Gastrocnemius medialis (tissue), 4 donors: ENCODE measurements at regions of chr9 and their contacts with region 1.

Region 1: GRCh38 chr9:14030375-14031059 is 283.4 kb downstream of the NFIB start:
- DNase-seq: peak; percentile 40 to 43
- ATAC-seq: peak; percentile 66 to 68
- H3K4me3 ChIP-seq: peak overlapping the region; percentile 20 to 46 (median 38)
- H3K27ac ChIP-seq: peak overlapping the region; percentile 83 to 91 (median 85)
- H3K4me1 ChIP-seq: peaks cover 43 to 66% of the 10 kb centered on the region in 2 donors
- H3K27me3 ChIP-seq: no peaks in the 10 kb centered on the region
- CTCF ChIP-seq: no peak
- POLR2A ChIP-seq: no peak

Region 2: GRCh38 chr9:14018081-14018480 is 12.4 kb before region 1 on chr9:
- in situ Hi-C with region 1: no loop called
- intact Hi-C with region 1: loop called (anchors 2 kb)
- DNase-seq: peak in 1 of 2 donors; percentile 45
- ATAC-seq: peak; percentile 34 to 56
- H3K4me3 ChIP-seq: no peak overlapping the region
- H3K27ac ChIP-seq: peak overlapping the region; percentile 21 to 70 (median 38)
- H3K4me1 ChIP-seq: peaks cover 20 to 32% of the 10 kb centered on the region in 2 donors
- H3K27me3 ChIP-seq: no peaks in the 10 kb centered on the region
- CTCF ChIP-seq: no peak
- POLR2A ChIP-seq: no peak

Region 3: DNA sequence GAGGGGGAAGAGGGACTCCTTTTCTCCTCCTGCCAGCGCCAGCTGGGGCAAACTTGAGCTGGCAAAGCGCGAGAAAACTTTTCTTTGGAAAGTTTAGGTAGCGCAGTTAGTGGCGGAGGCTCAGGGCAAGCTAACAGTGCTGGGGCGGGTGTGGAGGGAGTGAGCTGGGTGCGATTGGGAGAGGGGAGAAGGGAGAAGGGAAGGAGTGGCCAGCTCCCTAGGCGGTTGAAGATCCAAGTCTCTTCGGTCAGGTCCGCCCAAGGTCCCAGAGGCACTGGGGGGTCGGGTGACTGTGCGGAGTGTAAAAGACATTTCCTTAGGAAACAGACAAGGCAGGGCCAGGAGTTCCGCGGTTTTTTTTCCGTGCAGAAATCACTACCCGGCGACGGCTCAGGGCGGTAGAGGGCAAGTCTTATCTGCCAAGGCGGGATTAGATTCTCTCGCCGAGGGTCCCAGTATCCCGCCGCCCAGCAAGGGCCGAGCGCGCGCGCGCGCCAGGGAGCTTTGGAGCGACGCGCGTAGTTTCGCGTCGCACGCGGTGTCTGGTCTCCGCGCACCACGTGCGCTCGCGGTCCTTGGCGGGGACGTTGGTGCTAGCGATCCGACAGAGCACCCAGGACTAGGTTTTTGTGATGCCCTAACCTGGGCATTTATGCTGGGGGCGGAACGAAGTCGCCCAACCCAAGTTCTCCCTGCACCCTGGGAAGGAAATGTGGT is 317.0 kb after region 1 on chr9:
- in situ Hi-C with region 1: no loop called
- intact Hi-C with region 1: loop called (anchors 2 kb)
- DNase-seq: peak; percentile 45 to 64
- ATAC-seq: peak; percentile 53 to 67
- H3K4me3 ChIP-seq: peak overlapping the region; percentile 65 to 78 (median 70)
- H3K27ac ChIP-seq: peak overlapping the region; percentile 84 to 90 (median 87)
- H3K4me1 ChIP-seq: peaks cover 24 to 42% of the 10 kb centered on the region in 2 donors
- H3K27me3 ChIP-seq: no peaks in the 10 kb centered on the region
- CTCF ChIP-seq: peak in 1 of 5 experiments; percentile 35
- POLR2A ChIP-seq: peak; percentile 68 to 73